ENCODE measurements at regions of chr3 and their contacts with region 1.

Region 1: GRCh38 chr3:171149526-171150116 is 123.1 kb upstream of the SLC2A2 start:
- DNase-seq: no peak
- H3K4me3 Mint-ChIP-seq: no peak overlapping the region
- H3K27ac Mint-ChIP-seq: no peak overlapping the region
- H3K4me1 Mint-ChIP-seq: no peaks in the 10 kb centered on the region
- H3K27me3 Mint-ChIP-seq: no peaks in the 10 kb centered on the region

Region 2: DNA sequence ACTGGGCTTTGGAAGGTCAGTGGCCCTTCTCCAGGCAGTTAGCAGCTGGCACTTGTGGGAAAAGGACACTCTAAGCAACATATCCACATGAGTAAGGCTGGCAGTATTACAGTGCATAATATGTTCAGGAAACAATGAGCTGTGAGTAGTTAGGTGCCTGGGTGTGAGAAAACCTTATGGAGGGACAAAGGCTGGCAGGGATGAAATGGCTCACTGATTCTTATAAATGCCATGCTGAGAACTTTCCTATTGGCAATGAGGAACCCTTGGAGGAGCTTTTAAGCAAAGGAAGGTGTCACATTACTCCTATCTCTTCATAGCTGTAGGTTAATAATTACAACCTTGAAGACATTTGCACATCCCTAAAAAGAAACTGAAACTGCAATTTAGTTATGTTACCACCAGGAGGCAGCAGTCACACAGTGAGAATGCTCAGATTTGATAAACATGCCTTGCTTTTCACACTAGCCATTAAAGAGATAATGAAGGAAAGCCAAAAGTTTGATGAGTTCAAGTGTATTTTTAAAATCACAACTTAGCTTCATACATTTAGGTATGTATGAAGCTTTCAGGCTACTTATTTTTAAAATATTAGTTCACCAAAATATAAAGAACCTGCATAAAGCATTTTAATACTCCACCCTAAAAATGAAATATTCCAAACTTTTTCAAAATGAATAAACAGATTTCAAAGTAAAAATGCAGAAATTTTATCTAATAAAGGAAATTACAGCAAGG is 13.5 kb after region 1 on chr3:
- CTCF ChIA-PET with region 1: interaction called, 10 read pairs
- DNase-seq: peak; percentile 32
- H3K4me3 Mint-ChIP-seq: no peak overlapping the region
- H3K27ac Mint-ChIP-seq: peak overlapping the region; percentile 64
- H3K4me1 Mint-ChIP-seq: peaks cover 23% of the 10 kb centered on the region
- H3K27me3 Mint-ChIP-seq: no peaks in the 10 kb centered on the region

Measured in activated naive CD4-positive, alpha-beta T cell treated with anti-CD3 and anti-CD28 coated beads, Interleukin-2, amount 10 ng/mL, durations not matched to agents 7 days and 5 days (primary cell).